ENCODE measurements at regions of chr1 and their contacts with region 1.

Region 1: GRCh38 chr1:161225534-161226319 is at the start of gene TOMM40L:
- DNase-seq: peak; percentile 94
- total RNA-seq, gene TOMM40L: 13.4 to 15.0 TPM

Region 2: GRCh38 chr1:161290779-161291178 is 65.1 kb after region 1 on chr1:
- intact Hi-C with region 1: loop called in 1 of 2 experiments (anchors 2 kb)
- DNase-seq: no peak

Region 3: GRCh38 chr1:161374373-161374772 is 148.6 kb after region 1 on chr1:
- intact Hi-C with region 1: loop called in 1 of 2 experiments (anchors 10 kb)
- DNase-seq: no peak

Region 4: GRCh38 chr1:161389691-161390558 is 164.2 kb after region 1 on chr1:
- intact Hi-C with region 1: loop called in 1 of 2 experiments (anchors 10 kb)
- DNase-seq: peak; percentile 99

Measured in posterior vena cava (tissue), 2 donors.